CD8-positive, alpha-beta T cell (primary cell): ENCODE measurements at regions of chr17 and their contacts with region 1.

Region 1: DNA sequence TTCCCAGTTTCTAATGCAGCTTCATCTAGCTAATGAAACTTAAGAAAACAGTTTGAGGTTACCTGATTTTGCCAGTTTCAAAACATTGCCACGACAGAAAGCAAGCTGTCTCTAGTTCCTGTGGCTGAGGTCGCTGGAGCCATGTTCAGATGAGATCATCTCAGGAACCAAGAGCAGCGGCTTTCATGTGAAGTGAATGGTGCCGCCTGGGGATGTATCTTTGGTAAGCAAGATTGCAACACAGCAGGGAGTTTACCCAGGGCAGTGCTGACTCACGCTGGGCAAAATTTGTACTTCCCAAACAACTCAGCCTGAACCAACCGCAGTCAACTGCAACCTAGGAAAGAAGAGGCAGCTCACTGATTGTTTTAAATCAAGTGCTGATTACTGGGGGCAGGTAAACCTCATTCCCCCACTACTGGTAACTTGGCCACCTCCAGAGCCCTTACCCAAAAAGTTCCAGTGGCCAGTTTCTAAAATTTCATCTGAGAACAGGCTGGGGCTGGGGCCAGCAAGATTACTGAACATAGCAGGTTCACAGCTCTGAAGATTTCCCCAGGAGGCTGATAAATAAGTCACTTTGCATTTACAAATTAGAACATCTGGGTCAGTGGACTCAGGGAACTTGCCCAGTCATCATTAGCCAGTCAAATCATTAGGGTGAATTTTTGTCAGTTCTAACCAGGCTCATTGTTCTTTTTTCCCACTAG is at the start of gene RFFL:
- DNase-seq: peak; percentile 62 to 97 (median 85)
- ATAC-seq: peak; percentile 98
- H3K4me3 ChIP-seq: peak within 1 kb of the TSS in 1 of 2 experiments; percentile 38
- H3K4me3 Mint-ChIP-seq: peak within 1 kb of the TSS; percentile 85
- H3K27ac ChIP-seq: peak within 1 kb of the TSS; percentile 63 to 73
- H3K27ac Mint-ChIP-seq: peak within 1 kb of the TSS; percentile 97
- H3K4me1 ChIP-seq: peaks cover 35% of the 10 kb centered on the region
- H3K4me1 Mint-ChIP-seq: peaks cover 66% of the 10 kb centered on the region
- H3K27me3 ChIP-seq: no peaks in the 10 kb centered on the region
- H3K27me3 Mint-ChIP-seq: no peaks in the 10 kb centered on the region
- CTCF ChIP-seq: no peak
- total RNA-seq, gene RFFL: 55.2 to 64.4 TPM

Region 2: DNA sequence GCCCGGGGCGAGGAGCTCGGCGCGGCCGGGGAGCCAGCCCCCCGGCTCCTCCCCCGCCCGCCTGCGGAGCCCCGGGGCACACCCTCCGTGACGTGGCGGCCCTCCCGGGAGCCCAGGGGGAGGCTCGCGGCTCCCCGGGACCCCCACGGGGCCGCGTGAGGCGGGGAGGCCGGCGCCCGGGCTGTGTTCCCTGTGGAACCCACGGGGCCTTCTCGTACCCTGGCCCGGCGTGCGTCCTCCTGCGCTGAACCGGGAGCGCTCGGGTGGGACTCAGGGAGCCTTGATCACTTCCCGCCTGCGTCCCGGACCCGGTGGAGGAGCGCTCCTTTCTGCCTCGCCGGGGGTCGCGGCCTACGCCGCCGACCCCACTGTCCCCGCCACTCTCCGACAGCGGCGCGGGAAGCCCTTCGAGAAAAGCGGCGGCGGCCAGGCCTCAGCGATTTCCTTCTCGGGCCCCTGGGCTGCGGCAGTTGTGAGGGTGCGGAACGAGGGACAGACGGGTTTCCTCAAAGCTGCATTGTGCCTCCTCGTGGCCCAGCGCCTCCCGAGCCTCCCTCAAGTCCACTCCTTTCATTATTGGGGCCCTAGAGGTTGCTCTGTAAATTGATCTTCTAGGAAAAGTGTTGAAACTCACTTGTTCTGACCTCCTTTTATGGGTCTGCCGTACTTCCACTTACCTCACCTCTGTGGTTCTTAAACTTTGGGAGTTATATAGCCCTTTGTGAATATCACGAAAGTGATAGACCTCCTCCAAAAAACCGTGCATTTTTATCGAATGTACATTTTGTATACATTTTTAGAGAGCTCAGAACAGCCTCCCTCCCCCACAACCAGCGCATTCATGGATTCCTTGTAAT is 82.8 kb before region 1 on chr17:
- CTCF ChIA-PET with region 1: interaction called, 4 read pairs
- POLR2A ChIA-PET with region 1: interaction called, 4 read pairs
- intact Hi-C with region 1: loop called (anchors 1 kb)
- DNase-seq: peak in 8 of 9 experiments; percentile 13 to 90 (median 75)
- ATAC-seq: peak; percentile 84
- H3K4me3 ChIP-seq: peak overlapping the region; percentile 80 to 86
- H3K4me3 Mint-ChIP-seq: peak overlapping the region; percentile 92
- H3K27ac ChIP-seq: peak overlapping the region; percentile 93 to 98
- H3K27ac Mint-ChIP-seq: peak overlapping the region; percentile 98
- H3K4me1 ChIP-seq: peaks cover 26% of the 10 kb centered on the region
- H3K4me1 Mint-ChIP-seq: peaks cover 55% of the 10 kb centered on the region
- H3K27me3 ChIP-seq: no peaks in the 10 kb centered on the region
- H3K27me3 Mint-ChIP-seq: no peaks in the 10 kb centered on the region
- CTCF ChIP-seq: no peak

Region 3: GRCh38 chr17:34998205-34998604 is 65.5 kb before region 1 on chr17:
- CTCF ChIA-PET with region 1: interaction called, 73 read pairs
- POLR2A ChIA-PET with region 1: interaction called, 3 read pairs
- intact Hi-C with region 1: loop called (anchors 1 kb)
- DNase-seq: peak; percentile 57 to 87 (median 77)
- ATAC-seq: peak; percentile 97
- H3K4me3 ChIP-seq: no peak overlapping the region
- H3K4me3 Mint-ChIP-seq: no peak overlapping the region
- H3K27ac ChIP-seq: no peak overlapping the region
- H3K27ac Mint-ChIP-seq: peak overlapping the region; percentile 76
- H3K4me1 ChIP-seq: no peaks in the 10 kb centered on the region
- H3K4me1 Mint-ChIP-seq: peaks cover 5% of the 10 kb centered on the region
- H3K27me3 ChIP-seq: no peaks in the 10 kb centered on the region
- H3K27me3 Mint-ChIP-seq: no peaks in the 10 kb centered on the region
- CTCF ChIP-seq: peak; percentile 70

Region 4: DNA sequence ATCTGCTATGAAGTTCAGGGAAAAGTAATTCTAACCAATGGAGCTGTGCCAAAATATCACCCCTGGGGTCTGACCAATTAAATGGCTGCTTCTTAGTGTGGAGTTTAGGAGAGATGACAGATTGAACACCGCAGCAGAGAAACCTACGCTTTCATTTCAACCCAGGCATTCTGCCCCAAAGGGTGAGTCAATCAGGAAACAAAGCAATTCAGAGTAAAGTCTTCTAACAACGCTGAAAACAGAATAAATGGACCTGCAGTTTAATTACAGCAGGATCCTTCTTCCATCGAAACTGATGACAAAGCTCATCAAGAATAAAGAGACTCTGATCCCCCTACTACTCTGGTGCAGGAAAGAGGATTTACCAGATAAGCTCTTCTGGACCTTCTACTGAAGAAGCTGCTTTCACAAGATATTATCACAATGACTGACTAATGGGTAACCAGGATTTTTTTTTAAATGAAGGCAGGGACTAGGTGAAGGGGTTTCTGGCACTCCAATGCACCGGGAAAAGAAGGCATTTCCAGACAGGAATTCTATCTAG is 16.9 kb before region 1 on chr17:
- CTCF ChIA-PET with region 1: interaction called, 29 read pairs
- POLR2A ChIA-PET with region 1: interaction called, 6 read pairs
- intact Hi-C with region 1: loop called (anchors 1 kb)
- DNase-seq: peak; percentile 21 to 89 (median 64)
- ATAC-seq: peak; percentile 74
- H3K4me3 ChIP-seq: peak overlapping the region; percentile 31 to 33
- H3K4me3 Mint-ChIP-seq: peak overlapping the region; percentile 75
- H3K27ac ChIP-seq: peak overlapping the region; percentile 39 to 71
- H3K27ac Mint-ChIP-seq: peak overlapping the region; percentile 97
- H3K4me1 ChIP-seq: peaks cover 79% of the 10 kb centered on the region
- H3K4me1 Mint-ChIP-seq: peaks cover 76% of the 10 kb centered on the region
- H3K27me3 ChIP-seq: no peaks in the 10 kb centered on the region
- H3K27me3 Mint-ChIP-seq: no peaks in the 10 kb centered on the region
- CTCF ChIP-seq: no peak

Region 5: GRCh38 chr17:35103271-35103670 is 39.6 kb after region 1 on chr17:
- CTCF ChIA-PET with region 1: no interaction called
- POLR2A ChIA-PET with region 1: no interaction called
- intact Hi-C with region 1: no loop called
- DNase-seq: no peak
- ATAC-seq: no peak
- H3K4me3 ChIP-seq: no peak overlapping the region
- H3K4me3 Mint-ChIP-seq: no peak overlapping the region
- H3K27ac ChIP-seq: no peak overlapping the region
- H3K27ac Mint-ChIP-seq: no peak overlapping the region
- H3K4me1 ChIP-seq: no peaks in the 10 kb centered on the region
- H3K4me1 Mint-ChIP-seq: no peaks in the 10 kb centered on the region
- H3K27me3 ChIP-seq: no peaks in the 10 kb centered on the region
- H3K27me3 Mint-ChIP-seq: no peaks in the 10 kb centered on the region
- CTCF ChIP-seq: no peak